ENCODE measurements at regions of chr7 and their contacts with region 1.

Region 1: GRCh38 chr7:78769481-78770101 is 683.9 kb downstream of the MAGI2 start:
- DNase-seq: no peak
- ATAC-seq: peak; percentile 32
- H3K4me3 ChIP-seq: peak overlapping the region; percentile 51
- H3K27ac ChIP-seq: no peak overlapping the region
- H3K4me1 ChIP-seq: peaks cover 3% of the 10 kb centered on the region; the same call in 1 of the 2 replicates
- H3K27me3 ChIP-seq: no peaks in the 10 kb centered on the region
- CTCF ChIP-seq: no peak
- POLR2A ChIP-seq: no peak
- RAD21 ChIP-seq: no peak

Region 2: GRCh38 chr7:78151229-78151628 is 618.4 kb before region 1 on chr7:
- CTCF ChIA-PET with region 1: no interaction called
- POLR2A ChIA-PET with region 1: no interaction called
- dilution Hi-C with region 1: no loop called
- in situ Hi-C with region 1: no loop called
- intact Hi-C with region 1: no loop called
- DNase-seq: peak; percentile 86
- ATAC-seq: peak; percentile 86
- H3K4me3 ChIP-seq: no peak overlapping the region
- H3K27ac ChIP-seq: peak overlapping the region; percentile 3; the same call in 1 of the 2 replicates
- H3K4me1 ChIP-seq: peaks cover 10% of the 10 kb centered on the region
- H3K27me3 ChIP-seq: no peaks in the 10 kb centered on the region
- CTCF ChIP-seq: no peak
- POLR2A ChIP-seq: no peak
- RAD21 ChIP-seq: no peak

Region 3: GRCh38 chr7:78720066-78720465 is 49.5 kb before region 1 on chr7:
- CTCF ChIA-PET with region 1: no interaction called
- POLR2A ChIA-PET with region 1: no interaction called
- dilution Hi-C with region 1: no loop called
- in situ Hi-C with region 1: no loop called
- intact Hi-C with region 1: loop called (anchors 5 kb)
- DNase-seq: no peak
- ATAC-seq: no peak
- H3K4me3 ChIP-seq: no peak overlapping the region
- H3K27ac ChIP-seq: no peak overlapping the region
- H3K4me1 ChIP-seq: no peaks in the 10 kb centered on the region
- H3K27me3 ChIP-seq: no peaks in the 10 kb centered on the region
- CTCF ChIP-seq: no peak
- POLR2A ChIP-seq: no peak
- RAD21 ChIP-seq: no peak

Region 4: GRCh38 chr7:78993341-78993740 is 223.8 kb after region 1 on chr7:
- CTCF ChIA-PET with region 1: no interaction called
- POLR2A ChIA-PET with region 1: no interaction called
- dilution Hi-C with region 1: no loop called
- in situ Hi-C with region 1: no loop called
- intact Hi-C with region 1: no loop called
- DNase-seq: no peak
- ATAC-seq: no peak
- H3K4me3 ChIP-seq: no peak overlapping the region
- H3K27ac ChIP-seq: no peak overlapping the region
- H3K4me1 ChIP-seq: no peaks in the 10 kb centered on the region
- H3K27me3 ChIP-seq: no peaks in the 10 kb centered on the region
- CTCF ChIP-seq: no peak
- POLR2A ChIP-seq: no peak
- RAD21 ChIP-seq: no peak